ENCODE measurements at regions of chr19 and their contacts with region 1.

Region 1: GRCh38 chr19:33406521-33407139 is 33.1 kb downstream of the CEBPG start:
- DNase-seq: no peak
- H3K4me3 ChIP-seq: no peak overlapping the region
- CTCF ChIP-seq: peak; percentile 96

Region 2: GRCh38 chr19:32936065-32936464 is 470.6 kb before region 1 on chr19:
- CTCF ChIA-PET with region 1: no interaction called
- POLR2A ChIA-PET with region 1: no interaction called
- DNase-seq: no peak
- H3K4me3 ChIP-seq: no peak overlapping the region
- CTCF ChIP-seq: no peak

Region 3: DNA sequence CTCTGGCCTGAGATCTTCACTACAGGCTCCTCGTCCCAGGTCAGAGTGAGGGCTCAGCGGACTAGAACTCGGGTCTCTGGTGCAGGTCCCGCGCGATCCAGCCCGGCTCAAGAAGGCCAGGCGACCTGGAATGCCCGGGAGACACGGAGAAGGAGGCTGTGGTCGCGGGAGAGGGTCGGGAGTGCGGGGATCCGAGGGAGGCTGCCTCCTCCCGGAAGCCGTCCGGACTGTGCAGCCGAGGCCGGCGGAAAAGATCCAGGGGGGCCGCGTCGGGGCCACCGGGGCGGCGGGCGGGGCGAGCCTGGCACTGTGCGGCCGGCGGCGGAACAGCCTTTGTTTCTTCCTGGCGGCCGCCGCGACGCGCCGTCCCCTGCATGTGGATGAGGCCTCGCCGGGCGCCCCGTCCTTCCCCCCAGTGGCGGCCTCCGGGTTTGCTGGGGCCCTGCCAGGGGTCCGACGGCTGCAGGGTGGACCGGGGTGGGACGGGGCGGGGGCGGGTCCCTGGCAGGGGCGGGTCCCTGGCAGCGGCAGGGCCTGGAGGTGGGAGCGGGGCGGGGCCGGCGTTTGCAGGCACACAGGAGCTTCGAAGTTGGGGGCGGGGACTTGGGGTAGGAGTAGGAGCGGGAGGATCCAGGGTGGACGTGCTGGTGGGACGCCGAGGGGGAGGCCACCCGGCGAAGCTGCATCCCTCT is 179.9 kb before region 1 on chr19:
- CTCF ChIA-PET with region 1: interaction called, 12 read pairs
- POLR2A ChIA-PET with region 1: no interaction called
- DNase-seq: no peak
- H3K4me3 ChIP-seq: no peak overlapping the region
- CTCF ChIP-seq: no peak

Region 4: GRCh38 chr19:33245948-33246708 is 160.5 kb before region 1 on chr19:
- CTCF ChIA-PET with region 1: interaction called, 406 read pairs
- POLR2A ChIA-PET with region 1: no interaction called
- DNase-seq: no peak
- H3K4me3 ChIP-seq: no peak overlapping the region
- CTCF ChIP-seq: peak; percentile 19

Region 5: DNA sequence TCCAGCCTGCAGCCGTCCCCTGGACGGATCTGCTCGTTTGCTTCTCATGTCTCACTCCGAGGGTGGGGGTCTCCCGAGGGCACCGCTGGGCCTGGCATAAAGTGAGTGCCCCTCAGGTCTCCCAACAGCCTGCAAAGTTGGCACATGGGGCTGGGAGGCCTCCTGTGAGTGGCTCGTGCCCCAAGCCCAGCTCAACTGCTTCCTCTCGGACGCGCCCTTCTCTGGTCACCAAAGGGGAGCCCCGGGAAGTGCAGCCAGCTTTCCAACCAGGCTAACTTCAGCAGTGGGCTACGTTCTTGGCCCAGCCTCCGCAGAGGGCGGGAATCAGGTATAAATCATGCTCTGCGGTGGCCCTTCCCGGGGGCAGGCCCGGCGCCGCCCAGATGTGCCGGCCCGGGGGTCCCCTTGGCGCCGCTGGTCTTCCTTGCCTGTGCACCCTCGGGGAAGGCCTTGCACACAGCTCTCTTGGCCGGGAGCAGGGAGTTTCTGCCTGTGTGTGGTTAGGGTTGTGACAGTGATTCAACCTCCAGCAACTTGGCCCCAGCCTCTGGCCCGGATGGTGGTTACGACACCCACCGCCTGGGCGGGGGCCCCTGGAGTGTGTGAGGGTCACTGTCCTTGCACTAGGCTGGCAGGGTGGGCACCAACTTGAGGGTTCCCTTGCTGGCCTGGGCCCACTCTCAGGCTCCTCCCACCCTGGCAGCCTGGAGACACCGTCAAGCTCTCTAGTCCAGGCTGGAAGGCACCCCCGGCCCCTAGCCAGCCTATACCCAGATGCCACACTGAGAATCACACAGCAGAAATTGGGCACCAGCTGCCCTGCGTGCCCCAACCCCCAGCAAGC is 12.4 kb before region 1 on chr19:
- CTCF ChIA-PET with region 1: interaction called, 84 read pairs
- POLR2A ChIA-PET with region 1: no interaction called
- DNase-seq: peak; percentile 29
- H3K4me3 ChIP-seq: no peak overlapping the region
- CTCF ChIP-seq: no peak

Region 6: GRCh38 chr19:33660410-33661124 is 253.9 kb after region 1 on chr19:
- CTCF ChIA-PET with region 1: no interaction called
- POLR2A ChIA-PET with region 1: no interaction called
- DNase-seq: no peak
- H3K4me3 ChIP-seq: no peak overlapping the region
- CTCF ChIP-seq: no peak

Measured in AG04449 (cell line).